ENCODE measurements at regions of chr12 and their contacts with region 1.

Region 1: DNA sequence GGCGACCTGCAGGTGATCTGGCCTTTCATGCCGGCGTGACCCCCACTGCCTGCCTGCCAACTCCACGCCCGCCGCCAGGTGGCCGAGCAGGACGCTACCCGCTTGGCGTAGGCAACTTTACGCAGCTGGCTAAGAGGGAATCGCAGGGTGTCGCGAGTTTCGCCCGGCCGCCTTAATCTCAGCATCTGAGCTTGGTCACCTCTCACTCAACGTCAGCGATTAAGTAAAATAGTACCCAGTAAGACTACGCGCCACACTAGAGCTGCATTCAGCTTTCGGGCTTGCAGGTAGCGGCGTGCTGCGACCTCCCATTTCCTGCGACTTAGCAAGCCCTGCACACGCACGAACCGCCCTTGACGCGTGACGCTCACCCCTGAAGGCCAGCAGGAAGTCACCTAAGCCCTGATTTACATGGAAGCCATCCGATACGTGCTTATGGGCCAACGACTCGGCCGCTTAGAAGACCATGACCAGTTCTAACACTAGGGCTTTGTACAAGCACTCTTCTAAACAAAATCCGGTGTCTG is 33.2 kb downstream of the WBP11 start:
- DNase-seq: peak; percentile 72 to 96 (median 83)
- ATAC-seq: peak; percentile 50
- H3K4me3 ChIP-seq: peak overlapping the region; percentile 71
- H3K4me3 Mint-ChIP-seq: peak overlapping the region; percentile 97
- H3K27ac ChIP-seq: peak overlapping the region; percentile 95 to 99
- H3K27ac Mint-ChIP-seq: peak overlapping the region; percentile 100
- H3K4me1 ChIP-seq: peaks cover 40% of the 10 kb centered on the region
- H3K4me1 Mint-ChIP-seq: peaks cover 79% of the 10 kb centered on the region
- H3K27me3 ChIP-seq: no peaks in the 10 kb centered on the region
- H3K27me3 Mint-ChIP-seq: no peaks in the 10 kb centered on the region
- CTCF ChIP-seq: peak; percentile 81

Region 2: DNA sequence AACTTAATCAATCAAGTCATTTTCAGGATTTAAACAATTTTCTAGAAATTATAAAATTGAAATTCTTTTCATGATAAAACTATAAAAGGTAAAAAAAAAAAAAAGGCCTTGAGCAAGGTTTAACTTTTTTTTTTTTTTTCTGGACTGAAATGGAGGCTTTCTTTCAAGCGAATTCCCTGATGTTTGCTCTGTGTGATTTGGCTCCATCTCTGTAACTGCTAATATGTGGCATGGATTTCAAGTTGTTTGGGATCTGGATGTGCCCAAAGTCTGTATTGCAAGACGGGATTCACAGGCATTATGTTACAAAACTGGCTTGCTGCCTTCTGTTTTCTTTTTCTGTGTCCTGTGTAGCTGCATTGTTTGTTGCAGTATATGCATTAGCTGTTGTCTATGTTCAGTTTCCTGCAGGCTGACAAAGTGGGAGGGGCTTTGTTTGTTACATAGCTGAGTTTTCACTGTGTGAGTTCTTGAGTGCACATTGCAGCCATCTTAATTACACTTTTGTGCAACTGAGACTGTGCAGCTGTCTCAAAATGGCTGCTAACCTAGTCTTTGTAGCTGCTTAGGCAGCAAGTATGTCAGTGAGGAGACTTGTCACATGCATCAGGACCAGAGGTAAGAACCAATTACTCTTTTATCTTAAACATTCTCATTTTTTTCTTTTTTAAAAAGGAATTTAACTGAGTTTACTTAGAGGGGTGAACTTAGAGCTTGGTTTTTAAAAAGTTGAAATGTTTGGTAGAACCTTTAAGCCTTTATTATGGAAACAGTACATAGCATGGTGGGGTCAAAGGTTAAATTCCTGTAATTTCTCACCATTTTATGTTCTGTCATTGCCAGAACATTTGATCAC is 385.0 kb before region 1 on chr12:
- CTCF ChIA-PET with region 1: no interaction called
- POLR2A ChIA-PET with region 1: interaction called, 33 read pairs
- intact Hi-C with region 1: no loop called
- DNase-seq: peak in 13 of 14 experiments; percentile 17 to 95 (median 43)
- ATAC-seq: peak; percentile 92
- H3K4me3 ChIP-seq: peak overlapping the region; percentile 48
- H3K4me3 Mint-ChIP-seq: peak overlapping the region; percentile 77
- H3K27ac ChIP-seq: peak overlapping the region; percentile 23 to 37
- H3K27ac Mint-ChIP-seq: peak overlapping the region; percentile 91
- H3K4me1 ChIP-seq: peaks cover 26% of the 10 kb centered on the region
- H3K4me1 Mint-ChIP-seq: peaks cover 72% of the 10 kb centered on the region
- H3K27me3 ChIP-seq: no peaks in the 10 kb centered on the region
- H3K27me3 Mint-ChIP-seq: no peaks in the 10 kb centered on the region
- CTCF ChIP-seq: no peak

Region 3: GRCh38 chr12:14643251-14643650 is 126.8 kb before region 1 on chr12:
- CTCF ChIA-PET with region 1: interaction called, 4 read pairs
- POLR2A ChIA-PET with region 1: interaction called, 13 read pairs
- intact Hi-C with region 1: loop called in 1 of 2 experiments (anchors 10 kb)
- DNase-seq: peak in 3 of 14 experiments; percentile 49 to 64 (median 62)
- ATAC-seq: peak; percentile 49
- H3K4me3 ChIP-seq: no peak overlapping the region
- H3K4me3 Mint-ChIP-seq: peak overlapping the region; percentile 82
- H3K27ac ChIP-seq: no peak overlapping the region
- H3K27ac Mint-ChIP-seq: peak overlapping the region; percentile 58
- H3K4me1 ChIP-seq: peaks cover 17% of the 10 kb centered on the region
- H3K4me1 Mint-ChIP-seq: peaks cover 27% of the 10 kb centered on the region
- H3K27me3 ChIP-seq: no peaks in the 10 kb centered on the region
- H3K27me3 Mint-ChIP-seq: no peaks in the 10 kb centered on the region
- CTCF ChIP-seq: no peak

Region 4: GRCh38 chr12:14795028-14795448 is 25.0 kb after region 1 on chr12:
- CTCF ChIA-PET with region 1: interaction called, 4 read pairs
- POLR2A ChIA-PET with region 1: interaction called, 375 read pairs
- intact Hi-C with region 1: loop called in 1 of 2 experiments (anchors 5 kb)
- DNase-seq: no peak
- ATAC-seq: no peak
- H3K4me3 ChIP-seq: no peak overlapping the region
- H3K4me3 Mint-ChIP-seq: no peak overlapping the region
- H3K27ac ChIP-seq: no peak overlapping the region
- H3K27ac Mint-ChIP-seq: no peak overlapping the region
- H3K4me1 ChIP-seq: no peaks in the 10 kb centered on the region
- H3K4me1 Mint-ChIP-seq: peaks cover 13% of the 10 kb centered on the region
- H3K27me3 ChIP-seq: no peaks in the 10 kb centered on the region
- H3K27me3 Mint-ChIP-seq: no peaks in the 10 kb centered on the region
- CTCF ChIP-seq: no peak

Region 5: GRCh38 chr12:14960548-14961465 is 190.8 kb after region 1 on chr12:
- CTCF ChIA-PET with region 1: interaction called, 4 read pairs
- POLR2A ChIA-PET with region 1: interaction called, 144 read pairs
- intact Hi-C with region 1: loop called (anchors 2 to 5 kb)
- DNase-seq: peak in 12 of 14 experiments; percentile 45 to 79 (median 55)
- ATAC-seq: peak; percentile 40
- H3K4me3 ChIP-seq: peak overlapping the region; percentile 80
- H3K4me3 Mint-ChIP-seq: peak overlapping the region; percentile 97
- H3K27ac ChIP-seq: peak overlapping the region; percentile 89 to 90
- H3K27ac Mint-ChIP-seq: peak overlapping the region; percentile 94
- H3K4me1 ChIP-seq: peaks cover 41% of the 10 kb centered on the region
- H3K4me1 Mint-ChIP-seq: peaks cover 73% of the 10 kb centered on the region
- H3K27me3 ChIP-seq: no peaks in the 10 kb centered on the region
- H3K27me3 Mint-ChIP-seq: no peaks in the 10 kb centered on the region
- CTCF ChIP-seq: no peak